ENCODE measurements at regions of chr12 and their contacts with region 1.

Region 1: DNA sequence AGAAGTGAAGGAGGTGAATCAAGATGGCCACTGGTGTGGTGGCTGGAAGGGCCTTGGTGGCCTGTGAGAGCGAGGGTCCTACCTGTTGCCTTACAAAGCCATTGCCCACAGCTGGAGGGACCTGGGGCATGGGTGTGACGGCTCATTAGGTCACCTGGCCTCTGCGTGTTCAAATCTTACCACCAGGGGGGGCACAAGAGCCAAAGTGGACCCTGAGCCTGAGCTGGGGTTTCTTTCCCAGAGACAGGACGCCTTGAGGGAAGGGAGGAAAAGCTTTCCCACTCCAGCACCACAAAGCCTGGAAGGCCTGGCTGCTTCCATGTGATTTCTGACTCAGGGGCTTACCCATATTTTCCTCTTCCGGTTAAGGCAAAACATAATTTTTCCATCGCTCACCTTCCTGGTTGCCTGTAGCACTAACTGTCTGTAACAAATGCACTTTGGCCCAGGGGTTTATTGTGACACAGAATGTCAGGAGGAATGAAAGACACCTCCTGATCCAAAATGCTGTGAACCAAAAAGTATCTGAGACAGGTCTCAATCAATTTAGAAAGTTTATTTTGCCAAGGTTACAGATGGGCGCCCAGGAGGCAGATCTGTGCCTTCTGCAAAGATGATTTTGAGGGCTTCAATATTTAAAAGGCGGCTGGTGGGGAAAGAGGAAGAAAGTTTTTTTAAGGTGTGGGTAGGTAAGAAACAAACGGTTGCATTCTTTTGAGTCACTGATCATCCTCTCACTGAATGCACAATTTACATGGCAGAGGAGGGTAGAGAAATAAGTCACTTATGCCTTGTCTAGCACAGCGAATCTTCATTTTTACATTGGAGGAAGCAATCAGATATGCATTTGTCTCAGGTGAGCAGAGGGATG is 4.3 kb upstream of the CD9 start:
- DNase-seq: peak; percentile 68
- H3K4me3 ChIP-seq: no peak overlapping the region
- H3K27ac ChIP-seq: no peak overlapping the region
- H3K27me3 ChIP-seq: peaks cover 2% of the 10 kb centered on the region
- CTCF ChIP-seq: peak; percentile 93

Region 2: GRCh38 chr12:6062757-6063735 is 132.9 kb before region 1 on chr12:
- CTCF ChIA-PET with region 1: interaction called, 20 read pairs
- POLR2A ChIA-PET with region 1: interaction called, 3 read pairs
- DNase-seq: peak; percentile 21
- H3K4me3 ChIP-seq: no peak overlapping the region
- H3K27ac ChIP-seq: no peak overlapping the region
- H3K27me3 ChIP-seq: no peaks in the 10 kb centered on the region
- CTCF ChIP-seq: peak; percentile 99

Region 3: GRCh38 chr12:6167327-6168259 is 28.3 kb before region 1 on chr12:
- CTCF ChIA-PET with region 1: interaction called, 12 read pairs
- POLR2A ChIA-PET with region 1: no interaction called
- DNase-seq: peak; percentile 78
- H3K4me3 ChIP-seq: 0 out of 2 replicates have a peak overlapping the region, but pooled peaks have one; percentile 2
- H3K27ac ChIP-seq: peak overlapping the region; percentile 97
- H3K27me3 ChIP-seq: no peaks in the 10 kb centered on the region
- CTCF ChIP-seq: no peak

Region 4: DNA sequence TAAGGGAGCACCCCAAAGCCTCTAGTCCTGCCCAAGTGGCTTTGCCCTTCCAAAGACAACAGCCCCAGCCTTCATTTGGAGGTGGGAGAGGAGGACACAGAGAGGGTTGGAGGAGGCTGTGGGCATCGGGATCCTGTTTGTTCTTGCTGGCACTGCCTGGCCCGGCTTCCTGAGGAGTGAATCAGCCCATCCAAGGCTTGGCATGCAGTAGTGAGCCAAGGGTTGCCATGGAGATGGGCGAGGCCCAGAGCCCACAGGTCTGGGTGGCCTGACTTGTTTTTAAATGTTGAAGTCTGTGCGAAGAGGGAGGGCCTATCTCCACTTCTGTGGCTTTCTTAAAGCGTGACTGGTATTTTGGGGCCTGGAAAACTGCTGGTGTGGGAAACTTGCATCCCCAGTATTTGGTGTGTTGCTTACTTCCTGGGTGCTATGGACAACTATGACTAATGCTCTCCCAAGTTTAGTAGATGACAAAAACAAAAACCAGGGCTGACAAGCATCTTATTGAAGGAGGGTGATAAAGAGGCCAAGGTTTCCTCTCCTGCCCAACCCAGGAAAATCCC is 20.1 kb after region 1 on chr12:
- CTCF ChIA-PET with region 1: interaction called, 89 read pairs
- POLR2A ChIA-PET with region 1: no interaction called
- DNase-seq: no peak
- H3K4me3 ChIP-seq: no peak overlapping the region
- H3K27ac ChIP-seq: no peak overlapping the region
- H3K27me3 ChIP-seq: no peaks in the 10 kb centered on the region
- CTCF ChIP-seq: no peak

Region 5: DNA sequence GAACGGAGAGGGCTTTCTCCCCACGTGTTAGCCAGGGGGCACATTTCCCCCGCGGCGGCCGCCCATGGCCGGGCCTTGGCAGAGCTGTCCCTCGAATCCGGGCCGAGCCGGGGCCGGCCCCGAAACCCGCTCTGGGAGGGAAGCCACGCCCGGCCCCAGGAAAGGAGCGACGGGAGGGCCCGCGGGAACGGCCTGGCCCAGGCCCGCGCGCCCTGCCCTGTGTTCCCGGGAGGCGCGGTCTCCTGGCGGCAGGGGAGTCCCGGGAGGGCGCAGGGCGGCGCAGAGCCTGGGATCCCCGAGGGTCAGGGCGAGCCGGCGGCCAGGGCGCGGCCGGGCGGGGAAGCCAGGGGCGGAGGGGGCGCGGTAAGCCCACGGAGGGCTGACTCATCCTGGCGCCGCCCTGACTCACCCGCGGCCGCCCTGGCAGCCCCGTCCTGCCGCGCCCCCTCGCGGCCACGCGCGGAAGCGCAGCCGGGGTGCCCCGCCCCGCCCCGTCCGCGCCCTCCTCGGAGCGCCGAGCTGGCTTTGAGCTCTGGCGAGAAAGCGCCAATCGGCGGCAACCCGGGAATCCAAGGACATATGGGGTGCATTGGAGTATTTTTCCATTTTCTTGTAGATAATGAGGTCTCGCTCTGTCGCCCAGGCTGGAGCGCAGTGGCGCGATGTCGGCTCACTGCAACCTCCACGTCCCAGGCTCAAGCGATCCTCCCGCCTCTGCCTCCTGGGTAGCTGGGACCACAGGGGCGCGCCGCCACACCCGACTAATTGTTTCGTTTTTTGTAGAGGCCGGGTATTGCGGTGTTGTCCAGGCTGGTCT is 82.7 kb after region 1 on chr12:
- CTCF ChIA-PET with region 1: interaction called, 185 read pairs
- POLR2A ChIA-PET with region 1: interaction called, 14 read pairs
- DNase-seq: no peak
- H3K4me3 ChIP-seq: peak overlapping the region; percentile 52
- H3K27ac ChIP-seq: no peak overlapping the region
- H3K27me3 ChIP-seq: no peaks in the 10 kb centered on the region
- CTCF ChIP-seq: peak; percentile 50

Region 6: GRCh38 chr12:6613776-6614512 is 418.0 kb after region 1 on chr12:
- CTCF ChIA-PET with region 1: no interaction called
- POLR2A ChIA-PET with region 1: no interaction called
- DNase-seq: peak; percentile 93
- H3K4me3 ChIP-seq: no peak overlapping the region
- H3K27ac ChIP-seq: peak overlapping the region; percentile 65
- H3K27me3 ChIP-seq: no peaks in the 10 kb centered on the region
- CTCF ChIP-seq: 0 out of 2 replicates have a peak, but pooled peaks have one; percentile 5

Measured in AG04450 (cell line).